CD8-positive, alpha-beta T cell (primary cell): ENCODE measurements at regions of chr1 and their contacts with region 1.

Region 1: GRCh38 chr1:105180789-105181188 is 1431.1 kb downstream of the AMY1C start:
- DNase-seq: no peak
- ATAC-seq: no peak
- H3K4me3 ChIP-seq: no peak overlapping the region
- H3K4me3 Mint-ChIP-seq: no peak overlapping the region
- H3K27ac ChIP-seq: no peak overlapping the region
- H3K27ac Mint-ChIP-seq: no peak overlapping the region
- H3K4me1 ChIP-seq: no peaks in the 10 kb centered on the region
- H3K4me1 Mint-ChIP-seq: no peaks in the 10 kb centered on the region
- H3K27me3 ChIP-seq: no peaks in the 10 kb centered on the region
- H3K27me3 Mint-ChIP-seq: no peaks in the 10 kb centered on the region
- CTCF ChIP-seq: no peak

Region 2: DNA sequence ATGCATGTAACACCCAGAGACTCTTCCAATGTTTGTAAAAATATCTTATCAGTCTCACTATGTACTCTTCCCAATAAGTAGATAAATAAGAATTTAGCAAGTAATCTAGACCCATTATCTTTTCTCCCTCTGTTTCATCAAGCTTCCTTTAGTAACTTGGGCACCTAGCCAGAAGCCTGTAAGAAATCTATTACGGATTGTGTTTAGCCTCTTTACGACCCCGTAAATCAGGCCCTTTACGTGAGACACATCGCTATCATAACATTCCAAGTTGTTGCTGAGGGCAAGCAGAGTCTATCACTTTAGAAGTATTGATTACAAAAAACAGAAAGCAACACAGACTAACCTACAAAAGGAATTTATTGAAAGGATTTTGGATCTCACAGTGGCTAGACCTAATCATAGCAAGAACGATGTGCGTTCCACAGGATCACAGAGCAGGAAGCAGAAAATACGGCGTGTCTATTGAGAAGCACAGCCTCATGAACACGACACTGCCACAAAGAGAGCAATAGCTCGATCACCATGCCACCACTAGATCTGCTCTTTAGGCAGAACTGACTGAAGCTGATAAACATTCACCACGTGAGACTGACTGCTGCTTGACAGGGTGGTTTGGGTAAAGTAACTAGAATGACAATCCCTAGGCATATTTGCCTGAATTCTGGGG is 509.0 kb before region 1 on chr1:
- CTCF ChIA-PET with region 1: no interaction called
- POLR2A ChIA-PET with region 1: no interaction called
- intact Hi-C with region 1: no loop called
- DNase-seq: no peak
- ATAC-seq: no peak
- H3K4me3 ChIP-seq: no peak overlapping the region
- H3K4me3 Mint-ChIP-seq: no peak overlapping the region
- H3K27ac ChIP-seq: no peak overlapping the region
- H3K27ac Mint-ChIP-seq: no peak overlapping the region
- H3K4me1 ChIP-seq: no peaks in the 10 kb centered on the region
- H3K4me1 Mint-ChIP-seq: no peaks in the 10 kb centered on the region
- H3K27me3 ChIP-seq: no peaks in the 10 kb centered on the region
- H3K27me3 Mint-ChIP-seq: no peaks in the 10 kb centered on the region
- CTCF ChIP-seq: no peak

Region 3: DNA sequence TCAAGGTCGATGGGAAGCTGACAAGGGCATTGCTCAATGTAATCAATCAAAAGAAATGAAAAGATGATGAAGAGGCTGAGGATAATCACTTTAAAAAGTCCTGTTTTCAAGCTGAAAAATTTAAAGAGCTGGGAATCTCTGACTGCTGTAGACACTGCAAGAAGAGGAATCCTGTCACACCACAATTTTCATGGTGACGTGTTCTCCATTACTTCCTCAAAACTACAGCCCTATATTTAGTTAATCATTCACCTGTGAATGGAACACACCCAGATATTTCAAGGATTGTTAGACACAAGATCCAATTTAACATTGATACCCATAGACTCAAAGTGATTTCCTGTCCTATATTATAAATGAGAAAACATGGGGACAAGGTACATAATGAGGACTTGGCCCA is 382.8 kb before region 1 on chr1:
- CTCF ChIA-PET with region 1: no interaction called
- POLR2A ChIA-PET with region 1: no interaction called
- intact Hi-C with region 1: no loop called
- DNase-seq: no peak
- ATAC-seq: no peak
- H3K4me3 ChIP-seq: no peak overlapping the region
- H3K4me3 Mint-ChIP-seq: no peak overlapping the region
- H3K27ac ChIP-seq: no peak overlapping the region
- H3K27ac Mint-ChIP-seq: no peak overlapping the region
- H3K4me1 ChIP-seq: no peaks in the 10 kb centered on the region
- H3K4me1 Mint-ChIP-seq: no peaks in the 10 kb centered on the region
- H3K27me3 ChIP-seq: no peaks in the 10 kb centered on the region
- H3K27me3 Mint-ChIP-seq: no peaks in the 10 kb centered on the region
- CTCF ChIP-seq: no peak

Region 4: DNA sequence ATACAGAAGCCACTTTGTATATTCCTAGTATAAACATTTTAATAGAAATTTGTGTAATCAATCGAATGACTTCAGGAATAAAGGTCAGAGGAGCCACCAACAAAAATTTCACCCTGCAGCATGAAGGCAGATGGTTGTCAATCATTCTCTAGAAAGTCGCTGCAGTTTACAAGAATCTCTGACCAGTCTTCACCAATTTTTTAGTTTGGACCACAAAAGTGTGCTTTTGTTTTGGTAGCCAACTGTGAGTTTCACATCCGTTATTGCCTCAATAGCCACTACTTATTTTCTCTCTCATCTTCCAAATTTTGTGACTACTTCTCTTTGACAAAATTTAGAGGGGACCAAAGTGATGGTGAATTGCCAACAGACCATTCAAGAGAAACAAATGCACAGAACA is 275.5 kb before region 1 on chr1:
- CTCF ChIA-PET with region 1: no interaction called
- POLR2A ChIA-PET with region 1: no interaction called
- intact Hi-C with region 1: no loop called
- DNase-seq: no peak
- ATAC-seq: no peak
- H3K4me3 ChIP-seq: no peak overlapping the region
- H3K4me3 Mint-ChIP-seq: no peak overlapping the region
- H3K27ac ChIP-seq: no peak overlapping the region
- H3K27ac Mint-ChIP-seq: no peak overlapping the region
- H3K4me1 ChIP-seq: no peaks in the 10 kb centered on the region
- H3K4me1 Mint-ChIP-seq: no peaks in the 10 kb centered on the region
- H3K27me3 ChIP-seq: no peaks in the 10 kb centered on the region
- H3K27me3 Mint-ChIP-seq: no peaks in the 10 kb centered on the region
- CTCF ChIP-seq: no peak

Region 5: DNA sequence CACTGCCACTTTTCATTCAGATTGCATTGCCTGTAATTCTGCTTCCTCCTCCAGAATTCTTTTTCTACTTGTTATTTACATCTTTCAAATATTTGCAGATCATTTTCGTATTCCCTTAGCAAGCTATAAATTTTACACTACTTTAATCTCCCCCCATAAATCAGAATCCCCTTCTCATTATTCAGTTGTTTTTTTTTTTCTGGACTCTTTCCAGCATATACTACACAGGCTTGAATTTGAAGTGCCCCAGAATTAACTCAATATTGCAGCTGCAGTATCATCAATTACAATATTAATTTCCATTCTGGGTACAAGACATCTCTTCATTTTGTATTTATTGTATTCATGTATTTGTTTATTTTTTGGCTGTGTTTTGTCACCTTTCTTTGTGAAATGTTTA is 63.2 kb after region 1 on chr1:
- CTCF ChIA-PET with region 1: no interaction called
- POLR2A ChIA-PET with region 1: no interaction called
- intact Hi-C with region 1: loop called in 1 of 2 experiments (anchors 5 kb)
- DNase-seq: no peak
- ATAC-seq: no peak
- H3K4me3 ChIP-seq: no peak overlapping the region
- H3K4me3 Mint-ChIP-seq: no peak overlapping the region
- H3K27ac ChIP-seq: no peak overlapping the region
- H3K27ac Mint-ChIP-seq: no peak overlapping the region
- H3K4me1 ChIP-seq: no peaks in the 10 kb centered on the region
- H3K4me1 Mint-ChIP-seq: no peaks in the 10 kb centered on the region
- H3K27me3 ChIP-seq: no peaks in the 10 kb centered on the region
- H3K27me3 Mint-ChIP-seq: no peaks in the 10 kb centered on the region
- CTCF ChIP-seq: no peak

Region 6: GRCh38 chr1:105359457-105359856 is 178.7 kb after region 1 on chr1:
- CTCF ChIA-PET with region 1: no interaction called
- POLR2A ChIA-PET with region 1: no interaction called
- intact Hi-C with region 1: no loop called
- DNase-seq: no peak
- ATAC-seq: no peak
- H3K4me3 ChIP-seq: no peak overlapping the region
- H3K4me3 Mint-ChIP-seq: no peak overlapping the region
- H3K27ac ChIP-seq: no peak overlapping the region
- H3K27ac Mint-ChIP-seq: no peak overlapping the region
- H3K4me1 ChIP-seq: no peaks in the 10 kb centered on the region
- H3K4me1 Mint-ChIP-seq: no peaks in the 10 kb centered on the region
- H3K27me3 ChIP-seq: no peaks in the 10 kb centered on the region
- H3K27me3 Mint-ChIP-seq: no peaks in the 10 kb centered on the region
- CTCF ChIP-seq: no peak